Adrenal gland (tissue), 19 donors: ENCODE measurements at regions of chr20 and their contacts with region 1.

Region 1: DNA sequence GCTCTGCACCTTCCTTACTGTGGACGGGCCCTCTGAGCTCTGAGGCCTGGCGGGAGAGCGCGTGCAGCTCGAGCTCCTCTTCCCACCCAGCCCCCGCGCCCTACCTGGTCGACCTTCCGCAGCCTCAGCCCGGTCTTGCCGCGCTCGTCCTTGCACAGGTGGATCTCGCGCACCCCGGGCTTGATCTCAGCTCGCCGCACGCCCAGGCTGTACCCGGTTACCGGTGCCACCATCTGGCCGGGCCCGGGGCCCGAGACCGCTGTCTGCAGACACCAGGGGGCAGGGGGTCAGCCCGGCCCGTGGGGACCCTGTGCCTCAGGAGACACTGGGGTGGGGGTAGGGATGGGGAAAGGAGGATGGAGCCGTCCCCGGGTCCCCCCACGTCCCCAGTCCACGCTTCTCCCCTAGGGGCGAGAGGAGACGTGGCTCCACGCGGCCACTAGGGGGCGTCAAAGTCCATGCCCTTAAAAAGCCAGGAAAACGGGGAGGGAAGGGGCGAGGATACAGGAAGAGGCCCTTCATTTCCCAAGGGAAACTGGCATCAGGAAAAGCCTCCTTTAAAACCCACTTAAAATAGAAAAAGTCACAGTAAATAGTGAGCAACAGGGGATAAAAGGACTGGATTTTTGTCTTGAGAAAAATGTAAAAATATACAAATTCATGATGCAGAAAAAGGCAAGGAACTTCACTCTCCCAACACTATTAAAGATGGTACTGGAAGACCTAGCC is 15.5 kb downstream of the SDCBP2 start:
- DNase-seq: peak; percentile 65 to 87 (median 76)
- H3K4me3 ChIP-seq: no peak overlapping the region
- H3K27ac ChIP-seq: no peak overlapping the region
- H3K4me1 ChIP-seq: peaks cover 0 to 8% of the 10 kb centered on the region in 2 donors
- H3K27me3 ChIP-seq: no peaks in the 10 kb centered on the region
- CTCF ChIP-seq: peak; percentile 94 to 100 (median 97)
- POLR2A ChIP-seq: no peak

Region 2: DNA sequence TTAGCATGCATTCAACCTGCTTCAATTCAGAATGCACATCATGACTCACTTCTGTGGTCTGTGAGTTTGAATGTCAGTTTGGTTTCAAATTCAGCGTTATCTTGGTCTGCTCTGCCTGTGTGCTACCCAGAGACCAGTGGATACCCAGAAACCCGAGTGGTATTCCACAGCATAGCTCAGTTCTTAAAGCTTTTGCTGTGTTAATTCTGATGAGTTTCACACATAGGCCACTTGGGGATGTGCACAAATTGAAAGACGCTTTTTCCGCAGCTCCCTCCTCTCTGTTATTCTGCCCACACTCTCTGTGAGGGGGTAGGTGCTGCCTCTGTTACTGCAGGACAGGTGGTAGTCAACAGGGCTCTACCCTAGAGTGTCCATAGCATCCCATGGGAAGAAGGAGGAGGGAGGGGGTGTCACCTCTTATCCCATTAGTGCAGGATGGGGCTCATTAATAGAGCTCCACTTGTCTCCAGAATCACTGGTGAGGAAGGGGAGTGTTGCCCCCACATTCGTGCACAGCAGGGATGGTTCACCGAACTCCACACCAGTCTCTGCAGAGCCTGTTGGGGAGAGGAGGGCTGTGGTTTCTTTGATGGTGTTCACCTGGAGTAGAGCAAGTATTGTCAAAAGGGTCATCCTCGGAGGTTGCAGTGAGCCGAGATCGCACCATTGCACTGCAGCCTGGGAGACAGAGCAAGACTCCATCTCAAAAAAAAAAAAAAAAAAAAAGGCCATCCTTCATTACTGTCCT is 44.7 kb after region 1 on chr20:
- intact Hi-C with region 1: no loop called
- DNase-seq: peak in 1 of 7 donors; percentile 37
- H3K4me3 ChIP-seq: no peak overlapping the region
- H3K27ac ChIP-seq: no peak overlapping the region
- H3K4me1 ChIP-seq: peaks cover 1 to 19% of the 10 kb centered on the region in 2 donors
- H3K27me3 ChIP-seq: no peaks in the 10 kb centered on the region
- CTCF ChIP-seq: no peak
- POLR2A ChIP-seq: no peak

Region 3: DNA sequence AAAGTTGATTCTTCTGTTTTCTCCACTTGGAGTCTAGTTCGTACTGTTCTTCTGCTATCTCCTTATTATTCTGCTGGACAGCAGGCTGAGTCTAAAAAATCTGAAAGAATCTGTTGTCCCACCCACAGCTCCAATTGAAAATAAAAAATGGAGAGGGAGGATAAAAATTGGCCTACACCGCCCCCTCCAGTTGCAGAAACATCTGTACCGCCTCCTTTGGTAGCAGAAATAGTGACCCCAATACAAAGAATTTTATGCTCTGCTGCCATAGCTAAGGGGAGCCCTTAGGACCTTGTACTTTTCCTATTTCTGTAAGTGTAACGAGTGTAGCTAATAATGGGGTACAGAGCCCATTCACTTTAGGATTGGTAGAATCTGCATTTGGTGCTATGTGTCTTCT is 84.3 kb after region 1 on chr20:
- intact Hi-C with region 1: loop called in 1 of 2 experiments (anchors 5 kb)
- DNase-seq: no peak
- H3K4me3 ChIP-seq: no peak overlapping the region
- H3K27ac ChIP-seq: no peak overlapping the region
- H3K4me1 ChIP-seq: peaks cover 6% of the 10 kb centered on the region in 2 donors
- H3K27me3 ChIP-seq: peaks cover 16% of the 10 kb centered on the region
- CTCF ChIP-seq: peak; percentile 5 to 53 (median 33)
- POLR2A ChIP-seq: no peak

Region 4: DNA sequence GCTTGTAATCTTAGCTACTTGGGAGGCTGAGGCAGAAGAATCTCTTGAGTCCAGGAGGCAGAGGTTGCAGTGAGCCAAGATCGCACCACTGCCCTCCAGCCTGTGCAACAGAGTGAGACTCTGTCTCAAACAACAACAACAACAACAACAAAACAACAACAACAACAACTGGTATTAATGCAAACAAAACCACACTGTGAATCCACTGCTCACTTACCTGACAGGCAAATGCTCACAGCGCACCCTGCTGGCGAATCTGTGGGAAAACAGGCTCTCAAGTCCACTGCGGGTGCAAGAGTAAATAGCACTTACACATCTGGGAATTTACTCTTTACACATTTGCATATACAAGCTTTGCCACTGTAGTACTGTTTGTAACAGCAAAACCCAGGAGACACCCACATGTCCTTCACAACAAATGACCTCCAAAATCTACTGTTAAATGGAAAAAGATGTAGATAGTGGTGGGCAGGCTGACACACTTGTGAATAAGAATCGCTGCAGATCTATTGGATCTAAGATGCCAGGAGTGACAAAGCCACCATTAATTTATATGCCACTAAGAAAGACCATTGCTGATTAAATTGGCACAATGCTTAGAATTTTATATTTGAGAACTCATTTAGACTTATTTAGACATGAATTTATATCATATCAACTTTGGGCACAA is 124.0 kb after region 1 on chr20:
- intact Hi-C with region 1: loop called (anchors 2 to 5 kb)
- DNase-seq: peak; percentile 62 to 88 (median 74)
- H3K4me3 ChIP-seq: no peak overlapping the region
- H3K27ac ChIP-seq: no peak overlapping the region
- H3K4me1 ChIP-seq: no peaks in the 10 kb centered on the region
- H3K27me3 ChIP-seq: no peaks in the 10 kb centered on the region
- CTCF ChIP-seq: peak; percentile 74 to 88 (median 85)
- POLR2A ChIP-seq: no peak

Region 5: GRCh38 chr20:1524004-1524403 is 210.6 kb after region 1 on chr20:
- intact Hi-C with region 1: no loop called
- DNase-seq: no peak
- H3K4me3 ChIP-seq: no peak overlapping the region
- H3K27ac ChIP-seq: no peak overlapping the region
- H3K4me1 ChIP-seq: no peaks in the 10 kb centered on the region
- H3K27me3 ChIP-seq: no peaks in the 10 kb centered on the region
- CTCF ChIP-seq: no peak
- POLR2A ChIP-seq: no peak